PC-3 (cell line): ENCODE measurements at regions of chr21 and their contacts with region 1.

Region 1: DNA sequence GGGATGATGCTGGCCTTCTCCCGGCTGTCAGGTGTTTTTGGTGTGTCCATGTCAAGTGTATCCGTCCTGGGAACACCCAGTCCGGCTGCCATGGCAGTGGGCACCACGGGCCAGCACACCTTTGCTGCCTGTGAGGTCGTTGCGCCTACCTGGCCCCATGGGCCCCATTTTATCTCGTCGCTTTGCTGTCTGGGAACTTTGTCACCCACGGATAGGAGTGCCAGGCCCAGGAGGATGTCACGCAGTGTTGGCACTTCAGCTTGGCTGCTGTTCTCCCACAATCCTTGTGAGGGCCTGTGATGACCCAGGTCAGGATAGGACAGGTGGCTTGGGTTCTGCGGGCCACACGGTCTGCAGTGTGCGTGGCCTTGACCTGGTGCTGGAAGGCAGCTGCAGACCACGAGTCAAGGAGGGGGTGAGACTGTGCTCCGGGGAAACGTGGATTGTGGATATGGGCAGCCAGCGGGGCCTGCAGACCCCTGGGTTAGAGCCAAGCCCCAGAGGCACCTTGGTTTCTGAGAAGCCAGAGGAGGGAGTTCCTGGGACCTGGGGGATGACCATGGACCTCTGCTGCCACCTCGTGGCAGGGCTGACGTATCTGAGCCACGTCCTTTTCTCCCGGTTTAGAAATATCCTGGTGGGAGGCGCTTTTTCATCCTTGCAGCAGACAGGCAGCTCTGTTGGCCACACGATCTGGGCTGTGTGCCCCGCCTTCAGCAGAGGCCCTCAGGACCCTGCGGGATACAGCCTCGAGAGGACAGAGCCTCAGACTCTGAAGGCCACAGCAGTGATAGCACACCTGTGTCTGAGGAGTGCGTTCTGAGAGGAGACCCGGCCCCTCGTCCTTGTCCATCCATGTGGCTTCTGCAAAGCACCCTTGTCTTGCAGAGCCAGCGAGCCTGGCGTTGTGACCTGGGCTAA is 161.1 kb upstream of the COL6A1 start:
- DNase-seq: peak; percentile 95
- ATAC-seq: peak; percentile 68
- H3K4me3 ChIP-seq: no peak overlapping the region
- H3K27ac ChIP-seq: peak overlapping the region; percentile 90
- H3K4me1 ChIP-seq: peaks cover 31% of the 10 kb centered on the region
- H3K27me3 ChIP-seq: no peaks in the 10 kb centered on the region
- CTCF ChIP-seq: peak; percentile 95

Region 2: DNA sequence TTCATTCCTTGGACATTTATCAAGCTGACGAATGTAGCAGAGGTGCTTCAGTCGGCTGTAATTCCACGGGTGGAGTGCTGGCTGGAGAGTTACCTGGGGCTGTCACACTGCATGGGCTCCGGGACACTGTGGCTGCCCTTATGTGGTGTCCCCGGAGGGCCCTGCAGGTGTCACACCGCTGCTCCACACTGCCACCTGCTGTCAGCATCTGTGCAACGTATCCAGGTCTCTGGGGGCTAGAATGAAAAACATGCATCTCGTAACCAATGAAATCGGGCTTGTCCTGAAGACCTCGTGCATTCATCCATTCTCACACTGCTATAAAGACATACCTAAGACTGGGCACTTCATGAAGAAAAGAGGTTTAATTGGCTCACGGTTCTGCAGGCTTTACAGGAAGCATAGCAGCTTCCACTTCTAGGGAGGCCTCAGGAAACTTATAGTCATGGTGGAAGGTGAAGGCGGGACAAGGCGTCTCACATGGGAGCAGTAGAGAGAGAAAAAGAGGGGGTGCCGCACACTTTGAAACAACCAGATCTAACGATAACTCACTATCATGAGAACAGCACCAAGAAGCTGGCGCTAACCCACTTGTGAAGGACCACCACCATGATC is 223.6 kb before region 1 on chr21:
- CTCF ChIA-PET with region 1: no interaction called
- POLR2A ChIA-PET with region 1: no interaction called
- intact Hi-C with region 1: loop called (anchors 2 kb)
- DNase-seq: peak; percentile 79
- ATAC-seq: peak; percentile 98
- H3K4me3 ChIP-seq: no peak overlapping the region
- H3K27ac ChIP-seq: no peak overlapping the region
- H3K4me1 ChIP-seq: no peaks in the 10 kb centered on the region
- H3K27me3 ChIP-seq: peaks cover 20% of the 10 kb centered on the region; the same call in 1 of the 2 replicates
- CTCF ChIP-seq: peak; percentile 92

Region 3: GRCh38 chr21:45643021-45643980 is 177.1 kb before region 1 on chr21 and contains the start of gene PCBP3:
- CTCF ChIA-PET with region 1: no interaction called
- POLR2A ChIA-PET with region 1: no interaction called
- intact Hi-C with region 1: loop called (anchors 1 kb)
- DNase-seq: peak; percentile 96
- ATAC-seq: peak; percentile 80
- H3K4me3 ChIP-seq: peak within 1 kb of the TSS; percentile 66
- H3K27ac ChIP-seq: no peak within 1 kb of the TSS
- H3K4me1 ChIP-seq: peaks cover 9% of the 10 kb centered on the region
- H3K27me3 ChIP-seq: no peaks in the 10 kb centered on the region
- CTCF ChIP-seq: no peak
- total RNA-seq, gene PCBP3: 2.4 and 3.0 TPM in 2 replicates

Region 4: DNA sequence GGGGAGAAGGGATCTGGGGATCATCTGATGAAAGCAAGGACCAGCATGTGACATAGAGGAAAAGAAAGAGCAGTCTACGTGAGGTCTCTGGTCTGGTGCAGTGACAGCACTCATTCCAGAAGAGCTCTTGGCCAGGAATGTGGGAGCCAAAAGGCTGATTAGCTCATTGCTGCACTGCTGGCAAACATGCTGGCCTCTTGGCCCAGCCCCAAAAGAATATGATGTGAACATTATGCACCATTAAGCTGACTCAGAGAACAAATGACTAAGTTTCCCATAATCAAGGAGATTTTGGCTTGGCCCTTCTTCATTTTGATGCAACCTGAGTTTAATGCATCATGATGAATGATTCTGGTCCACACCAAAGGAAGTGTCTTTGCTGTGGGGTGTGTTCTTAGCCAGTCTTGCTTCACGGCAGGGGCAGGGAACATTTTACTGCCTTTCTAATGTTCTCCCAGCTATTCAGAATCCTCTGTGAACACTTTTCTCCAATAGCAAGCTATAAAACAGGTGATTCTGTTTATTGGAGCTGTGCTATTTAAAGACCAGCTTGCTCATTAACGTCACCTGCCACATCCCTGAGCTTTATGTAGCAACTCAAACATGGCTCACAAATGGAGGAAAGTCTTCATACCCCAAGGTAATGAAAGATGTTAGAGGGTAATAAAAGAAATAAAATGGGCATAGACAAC is 121.8 kb before region 1 on chr21:
- CTCF ChIA-PET with region 1: no interaction called
- POLR2A ChIA-PET with region 1: no interaction called
- intact Hi-C with region 1: loop called (anchors 2 kb)
- DNase-seq: peak; percentile 95
- ATAC-seq: peak; percentile 86
- H3K4me3 ChIP-seq: no peak overlapping the region
- H3K27ac ChIP-seq: peak overlapping the region; percentile 49
- H3K4me1 ChIP-seq: peaks cover 15% of the 10 kb centered on the region
- H3K27me3 ChIP-seq: no peaks in the 10 kb centered on the region
- CTCF ChIP-seq: no peak

Region 5: GRCh38 chr21:45954261-45954660 is 133.8 kb after region 1 on chr21:
- CTCF ChIA-PET with region 1: no interaction called
- POLR2A ChIA-PET with region 1: no interaction called
- intact Hi-C with region 1: no loop called
- DNase-seq: no peak
- ATAC-seq: no peak
- H3K4me3 ChIP-seq: no peak overlapping the region
- H3K27ac ChIP-seq: no peak overlapping the region
- H3K4me1 ChIP-seq: peaks cover 14% of the 10 kb centered on the region
- H3K27me3 ChIP-seq: peaks cover 32% of the 10 kb centered on the region
- CTCF ChIP-seq: no peak